ENCODE measurements at regions of chr15 and their contacts with region 1.

Region 1: GRCh38 chr15:66851226-66852071 is 149.4 kb downstream of the SMAD6 start:
- DNase-seq: peak; percentile 87
- H3K4me3 ChIP-seq: no peak overlapping the region
- H3K27ac ChIP-seq: no peak overlapping the region
- H3K4me1 ChIP-seq: peaks cover 9% of the 10 kb centered on the region
- H3K27me3 ChIP-seq: no peaks in the 10 kb centered on the region
- CTCF ChIP-seq: peak; percentile 96

Region 2: GRCh38 chr15:66603301-66604179 is 247.9 kb before region 1 on chr15:
- intact Hi-C with region 1: loop called (anchors 5 kb)
- DNase-seq: peak; percentile 68
- H3K4me3 ChIP-seq: no peak overlapping the region
- H3K27ac ChIP-seq: no peak overlapping the region
- H3K4me1 ChIP-seq: no peaks in the 10 kb centered on the region
- H3K27me3 ChIP-seq: no peaks in the 10 kb centered on the region
- CTCF ChIP-seq: peak; percentile 77

Region 3: GRCh38 chr15:66698318-66698961 is 153.0 kb before region 1 on chr15:
- intact Hi-C with region 1: loop called (anchors 5 kb)
- DNase-seq: peak; percentile 75
- H3K4me3 ChIP-seq: no peak overlapping the region
- H3K27ac ChIP-seq: no peak overlapping the region
- H3K4me1 ChIP-seq: no peaks in the 10 kb centered on the region
- H3K27me3 ChIP-seq: no peaks in the 10 kb centered on the region
- CTCF ChIP-seq: peak; percentile 67

Region 4: GRCh38 chr15:66773129-66773873 is 78.1 kb before region 1 on chr15:
- intact Hi-C with region 1: loop called (anchors 5 kb)
- DNase-seq: peak; percentile 68
- H3K4me3 ChIP-seq: no peak overlapping the region
- H3K27ac ChIP-seq: peak overlapping the region; percentile 52
- H3K4me1 ChIP-seq: peaks cover 19% of the 10 kb centered on the region
- H3K27me3 ChIP-seq: no peaks in the 10 kb centered on the region
- CTCF ChIP-seq: no peak